CD14-positive monocyte (primary cell): ENCODE measurements at regions of chr1 and their contacts with region 1.

Region 1: GRCh38 chr1:109984456-109985275 is at the start of gene AHCYL1:
- DNase-seq: peak; percentile 99
- H3K4me3 ChIP-seq: peak within 1 kb of the TSS; percentile 76 to 88 (median 87)
- H3K4me3 Mint-ChIP-seq: peak within 1 kb of the TSS; percentile 92 to 94
- H3K27ac ChIP-seq: peak within 1 kb of the TSS; percentile 73 to 89
- H3K27ac Mint-ChIP-seq: peak within 1 kb of the TSS; percentile 97 to 99 (median 98)
- H3K4me1 ChIP-seq: peaks cover 29 to 44% of the 10 kb centered on the region in 2 donors
- H3K4me1 Mint-ChIP-seq: peaks cover 47% of the 10 kb centered on the region
- H3K27me3 ChIP-seq: no peaks in the 10 kb centered on the region
- H3K27me3 Mint-ChIP-seq: peaks cover 2 to 7% (median 3%) of the 10 kb centered on the region in 3 donors
- CTCF ChIP-seq: peak; percentile 95
- polyA plus RNA-seq, gene AHCYL1: 39.1 to 63.9 (median 48.8) TPM

Region 2: GRCh38 chr1:109548321-109549267 is 436.1 kb before region 1 on chr1 and contains the start of gene GNAI3:
- intact Hi-C with region 1: loop called (anchors 2 to 10 kb)
- DNase-seq: peak; percentile 98 to 99 (median 98)
- H3K4me3 ChIP-seq: peak within 1 kb of the TSS; percentile 73 to 99 (median 96)
- H3K4me3 Mint-ChIP-seq: peak within 1 kb of the TSS; percentile 99 to 100
- H3K27ac ChIP-seq: peak within 1 kb of the TSS; percentile 96 to 99
- H3K27ac Mint-ChIP-seq: peak within 1 kb of the TSS; percentile 99 to 100 (median 100)
- H3K4me1 ChIP-seq: peaks cover 23 to 52% of the 10 kb centered on the region in 2 donors
- H3K4me1 Mint-ChIP-seq: peaks cover 50% of the 10 kb centered on the region
- H3K27me3 ChIP-seq: no peaks in the 10 kb centered on the region
- H3K27me3 Mint-ChIP-seq: no peaks in the 10 kb centered on the region
- CTCF ChIP-seq: no peak
- polyA plus RNA-seq, gene GNAI3: 3.0 to 14.2 (median 10.4) TPM

Region 3: DNA sequence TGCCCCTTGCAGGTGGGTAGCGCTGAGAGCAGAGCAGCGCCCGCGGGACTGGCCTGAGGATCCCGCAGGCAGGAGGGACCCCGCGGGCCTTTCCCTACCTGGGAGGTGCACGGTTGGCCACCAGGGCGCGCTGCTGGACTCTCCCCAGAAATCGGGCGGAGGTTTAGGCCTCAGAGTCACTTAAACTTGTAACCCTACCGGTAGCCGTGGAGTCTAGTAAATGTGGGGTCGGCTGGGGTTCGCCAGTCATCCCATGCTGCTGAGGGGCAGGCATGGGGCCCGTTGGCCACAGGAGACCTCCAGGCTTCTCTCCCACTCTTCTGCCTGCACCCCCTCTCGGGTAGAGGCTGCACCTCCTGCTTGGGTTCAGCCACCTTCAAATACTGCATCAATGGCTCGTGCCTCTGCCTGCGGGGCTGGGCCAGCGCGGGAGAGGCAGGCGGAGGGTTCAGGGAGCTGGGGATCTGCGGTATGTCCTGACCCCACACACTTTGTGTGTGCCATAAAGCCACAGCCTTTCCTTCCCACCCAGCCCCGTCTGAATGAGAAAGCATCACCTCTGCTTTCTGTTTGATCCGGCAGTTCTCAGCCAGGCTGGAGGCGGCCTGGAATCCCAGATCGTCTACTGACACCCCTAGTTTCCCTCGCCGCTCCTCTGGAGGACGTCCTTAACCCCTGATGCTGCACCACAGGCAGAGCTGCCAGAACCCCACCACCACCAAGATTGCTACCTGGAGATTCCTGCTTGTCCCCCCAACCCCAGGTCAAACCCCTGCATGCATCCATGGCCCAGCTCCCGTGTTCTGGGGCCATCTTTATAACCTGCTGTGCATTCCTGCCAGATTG is 341.1 kb before region 1 on chr1:
- intact Hi-C with region 1: loop called in 1 of 2 experiments (anchors 10 kb)
- DNase-seq: peak; percentile 59 to 75 (median 70)
- H3K4me3 ChIP-seq: no peak overlapping the region
- H3K4me3 Mint-ChIP-seq: peak overlapping the region in 1 of 2 donors; percentile 51
- H3K27ac ChIP-seq: no peak overlapping the region
- H3K27ac Mint-ChIP-seq: no peak overlapping the region
- H3K4me1 ChIP-seq: peaks cover 7 to 14% of the 10 kb centered on the region in 2 donors
- H3K4me1 Mint-ChIP-seq: peaks cover 16% of the 10 kb centered on the region
- H3K27me3 ChIP-seq: no peaks in the 10 kb centered on the region
- H3K27me3 Mint-ChIP-seq: peaks cover 3 to 7% (median 4%) of the 10 kb centered on the region in 3 donors
- CTCF ChIP-seq: peak; percentile 93

Region 4: GRCh38 chr1:109773146-109773899 is 211.3 kb before region 1 on chr1:
- intact Hi-C with region 1: loop called (anchors 1 to 2 kb)
- DNase-seq: peak; percentile 72 to 82 (median 78)
- H3K4me3 ChIP-seq: no peak overlapping the region
- H3K4me3 Mint-ChIP-seq: no peak overlapping the region
- H3K27ac ChIP-seq: no peak overlapping the region
- H3K27ac Mint-ChIP-seq: peak overlapping the region in 1 of 7 donors; percentile 19
- H3K4me1 ChIP-seq: no peaks in the 10 kb centered on the region
- H3K4me1 Mint-ChIP-seq: peaks cover 4% of the 10 kb centered on the region
- H3K27me3 ChIP-seq: no peaks in the 10 kb centered on the region
- H3K27me3 Mint-ChIP-seq: peaks cover 0 to 15% (median 13%) of the 10 kb centered on the region in 3 donors
- CTCF ChIP-seq: peak; percentile 81

Region 5: GRCh38 chr1:109910123-109910962 is 74.3 kb before region 1 on chr1 and contains the start of gene CSF1:
- intact Hi-C with region 1: loop called in 1 of 2 experiments (anchors 10 kb)
- DNase-seq: peak; percentile 47 to 83 (median 70)
- H3K4me3 ChIP-seq: peak within 1 kb of the TSS; percentile 48 to 75 (median 56)
- H3K4me3 Mint-ChIP-seq: peak within 1 kb of the TSS; percentile 89 to 92
- H3K27ac ChIP-seq: peak within 1 kb of the TSS in 1 of 2 donors; percentile 38
- H3K27ac Mint-ChIP-seq: peak within 1 kb of the TSS; percentile 36 to 87 (median 79)
- H3K4me1 ChIP-seq: peaks cover 17 to 24% of the 10 kb centered on the region in 2 donors
- H3K4me1 Mint-ChIP-seq: peaks cover 33% of the 10 kb centered on the region
- H3K27me3 ChIP-seq: peaks cover 29 to 64% of the 10 kb centered on the region in 2 donors
- H3K27me3 Mint-ChIP-seq: peaks cover 55 to 70% (median 60%) of the 10 kb centered on the region in 3 donors
- CTCF ChIP-seq: no peak
- polyA plus RNA-seq, gene CSF1: 0.11 to 0.69 (median 0.38) TPM

Region 6: DNA sequence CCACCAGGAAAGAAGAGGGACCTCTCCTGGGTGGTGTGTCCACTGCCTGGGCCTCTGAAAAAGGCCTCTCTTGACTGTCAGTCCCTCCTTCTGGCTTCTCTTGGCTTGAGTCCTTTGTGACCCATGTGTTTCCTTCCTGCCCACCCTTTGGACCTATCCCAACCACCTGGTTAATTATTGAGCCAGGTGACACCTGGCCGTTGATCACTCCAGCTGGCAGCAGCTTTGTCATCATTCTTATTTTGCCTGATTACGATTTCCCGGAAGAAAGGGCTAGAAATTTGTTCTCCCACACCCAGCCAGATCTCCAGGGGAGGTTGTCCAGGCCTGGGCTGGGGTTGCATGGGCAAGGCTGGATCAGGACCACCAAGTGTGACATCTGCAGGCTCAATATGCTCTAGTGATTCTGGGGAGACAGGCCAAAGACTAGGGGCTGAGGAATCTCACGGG is 49.2 kb before region 1 on chr1:
- intact Hi-C with region 1: loop called in 1 of 2 experiments (anchors 5 kb)
- DNase-seq: no peak
- H3K4me3 ChIP-seq: no peak overlapping the region
- H3K4me3 Mint-ChIP-seq: no peak overlapping the region
- H3K27ac ChIP-seq: no peak overlapping the region
- H3K27ac Mint-ChIP-seq: no peak overlapping the region
- H3K4me1 ChIP-seq: peaks cover 12 to 16% of the 10 kb centered on the region in 2 donors
- H3K4me1 Mint-ChIP-seq: peaks cover 15% of the 10 kb centered on the region
- H3K27me3 ChIP-seq: no peaks in the 10 kb centered on the region
- H3K27me3 Mint-ChIP-seq: peaks cover 2 to 8% (median 7%) of the 10 kb centered on the region in 3 donors
- CTCF ChIP-seq: no peak

Region 7: GRCh38 chr1:110083446-110084226 is 99.0 kb after region 1 on chr1:
- intact Hi-C with region 1: no loop called
- DNase-seq: peak in 2 of 3 donors; percentile 33 to 34
- H3K4me3 ChIP-seq: peak overlapping the region; percentile 47 to 81 (median 54)
- H3K4me3 Mint-ChIP-seq: peak overlapping the region; percentile 89 to 98
- H3K27ac ChIP-seq: no peak overlapping the region
- H3K27ac Mint-ChIP-seq: peak overlapping the region in 2 of 7 donors; percentile 9 to 32
- H3K4me1 ChIP-seq: peaks cover 15 to 24% of the 10 kb centered on the region in 2 donors
- H3K4me1 Mint-ChIP-seq: peaks cover 25% of the 10 kb centered on the region
- H3K27me3 ChIP-seq: peaks cover 36 to 58% of the 10 kb centered on the region in 2 donors
- H3K27me3 Mint-ChIP-seq: peaks cover 58 to 69% (median 58%) of the 10 kb centered on the region in 3 donors
- CTCF ChIP-seq: no peak